PC-9 (cell line): ENCODE measurements at regions of chr22 and their contacts with region 1.

Region 1: DNA sequence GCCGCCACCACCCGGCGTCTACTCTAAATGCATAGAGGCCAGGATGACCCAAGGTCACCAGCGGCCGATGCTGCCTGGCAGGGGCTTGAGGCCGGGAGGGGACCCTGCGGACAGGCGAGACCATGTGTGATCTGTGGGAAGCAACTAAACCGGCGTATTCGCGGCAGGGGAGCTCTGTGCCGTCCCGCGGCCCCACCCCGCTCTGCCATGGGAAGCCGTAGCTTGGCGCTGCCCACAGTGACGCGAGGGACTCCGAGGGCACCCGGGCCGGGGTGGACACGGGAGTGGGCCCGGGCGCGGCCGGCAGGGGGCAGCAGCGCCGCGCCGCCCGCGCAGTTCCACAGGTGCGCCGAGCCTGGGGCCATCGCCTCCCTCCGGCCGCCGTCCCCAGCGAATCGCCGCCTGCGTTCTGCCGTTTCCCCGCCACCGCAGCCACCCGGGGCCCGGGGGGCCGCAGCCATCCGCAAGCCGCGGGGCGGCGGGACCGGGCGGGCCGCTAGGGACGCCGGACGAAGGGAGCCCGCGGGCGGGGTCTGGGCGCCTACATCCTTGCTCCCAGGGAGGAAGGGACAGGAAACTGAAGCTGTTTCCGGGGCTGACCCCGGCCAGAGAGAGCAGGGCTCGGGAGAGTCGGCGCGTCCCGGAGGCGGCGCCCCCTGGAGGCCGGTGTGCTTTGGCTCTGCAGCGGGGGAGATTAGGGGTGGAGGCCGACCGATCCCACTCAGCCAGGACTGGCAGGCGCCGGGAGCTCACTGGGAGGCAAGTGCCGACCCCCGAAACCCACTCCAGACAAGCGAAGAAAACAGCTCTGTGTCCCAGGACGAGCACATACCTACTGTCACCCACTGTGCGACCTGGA is 12.5 kb upstream of the HDHD5 start:
- DNase-seq: peak; percentile 64 to 85
- H3K4me3 ChIP-seq: peak overlapping the region; percentile 64
- H3K27ac ChIP-seq: peak overlapping the region; percentile 41; the same call in 1 of the 2 replicates
- H3K4me1 ChIP-seq: no peaks in the 10 kb centered on the region
- H3K27me3 ChIP-seq: peaks cover 4% of the 10 kb centered on the region; the same call in 1 of the 2 replicates
- CTCF ChIP-seq: peak; percentile 75

Region 2: DNA sequence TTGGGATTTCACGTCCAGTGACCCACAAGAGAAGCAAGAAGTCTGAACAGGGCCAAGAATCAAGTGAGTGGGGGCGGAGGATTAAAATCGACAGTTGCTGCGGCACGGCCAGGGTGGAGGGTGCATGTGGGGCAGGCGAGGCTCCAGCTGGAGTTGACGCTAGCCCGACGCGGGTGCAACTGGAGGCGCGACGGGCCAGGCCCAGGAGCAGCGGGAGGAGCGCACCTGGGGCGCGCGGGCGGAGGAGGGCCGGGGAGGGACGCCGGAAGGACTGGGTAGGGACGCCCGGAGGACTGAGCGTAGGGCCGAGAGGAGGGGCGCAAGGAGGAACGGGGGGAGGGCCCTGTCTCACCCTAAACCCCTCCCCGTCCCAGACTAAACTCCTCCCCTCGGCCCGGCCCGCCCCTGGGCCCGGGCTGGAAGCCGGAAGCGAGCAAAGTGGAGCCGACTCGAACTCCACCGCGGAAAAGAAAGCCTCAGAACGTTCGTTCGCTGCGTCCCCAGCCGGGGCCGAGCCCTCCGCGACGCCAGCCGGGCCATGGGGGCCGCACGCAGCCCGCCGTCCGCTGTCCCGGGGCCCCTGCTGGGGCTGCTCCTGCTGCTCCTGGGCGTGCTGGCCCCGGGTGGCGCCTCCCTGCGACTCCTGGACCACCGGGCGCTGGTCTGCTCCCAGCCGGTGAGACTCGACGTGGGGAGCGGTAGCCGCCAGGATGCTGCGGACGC is 86.8 kb before region 1 on chr22 and contains the start of gene IL17RA:
- CTCF ChIA-PET with region 1: interaction called, 11 read pairs
- POLR2A ChIA-PET with region 1: no interaction called
- intact Hi-C with region 1: no loop called
- DNase-seq: peak; percentile 55 to 86
- H3K4me3 ChIP-seq: peak within 1 kb of the TSS; percentile 78
- H3K27ac ChIP-seq: no peak within 1 kb of the TSS
- H3K4me1 ChIP-seq: no peaks in the 10 kb centered on the region
- H3K27me3 ChIP-seq: no peaks in the 10 kb centered on the region
- CTCF ChIP-seq: no peak
- total RNA-seq, gene IL17RA: 5.0 and 8.2 TPM in 2 replicates

Region 3: DNA sequence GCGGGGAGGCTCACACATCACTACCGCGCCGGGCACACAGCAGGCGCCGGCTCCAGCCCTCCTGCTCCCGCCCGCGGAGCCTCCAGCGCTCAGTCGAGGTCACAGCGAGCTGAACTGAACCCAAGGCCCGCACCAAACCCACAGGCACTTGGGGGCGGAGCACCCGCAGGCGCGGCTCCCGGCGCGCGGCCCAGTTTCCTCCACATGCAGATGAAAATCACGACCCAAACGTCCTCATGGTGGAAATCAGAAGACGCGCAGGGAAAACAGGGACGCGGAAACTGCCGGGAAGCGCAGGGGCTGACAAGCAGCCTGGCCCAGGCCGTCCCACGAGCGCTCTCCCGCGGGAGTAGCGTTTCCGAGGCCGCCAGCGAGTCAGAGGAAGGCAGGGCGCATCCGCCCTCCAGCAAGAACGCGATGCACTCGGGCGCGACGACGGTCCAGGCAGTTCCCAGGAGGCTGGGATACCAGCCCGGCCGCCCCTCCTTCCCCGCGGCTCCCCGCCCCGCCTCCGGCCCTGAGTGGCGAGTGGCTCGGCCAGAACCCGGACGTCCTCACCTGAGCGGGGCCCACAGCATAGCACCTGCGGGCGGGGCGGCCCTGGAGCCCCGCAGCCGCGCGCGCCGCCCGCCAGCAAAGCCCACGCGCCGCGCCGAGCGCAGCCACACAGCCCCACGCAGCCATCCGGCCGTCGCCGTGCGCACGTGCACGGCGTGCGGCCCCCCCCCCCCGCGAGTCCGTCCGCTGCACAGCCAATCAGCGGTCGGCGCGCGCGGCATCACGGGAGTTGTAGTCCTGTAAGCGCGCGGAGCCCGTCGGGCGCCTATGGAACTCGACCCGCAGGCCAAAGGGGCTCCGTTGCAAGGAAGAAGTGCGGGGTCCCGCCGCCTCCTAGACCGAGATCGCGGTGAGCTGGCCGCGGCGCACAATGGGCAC is 12.7 kb before region 1 on chr22 and contains the start of gene HDHD5:
- CTCF ChIA-PET with region 1: interaction called, 11 read pairs
- POLR2A ChIA-PET with region 1: interaction called, 6 read pairs
- intact Hi-C with region 1: no loop called
- DNase-seq: peak; percentile 69 to 84
- H3K4me3 ChIP-seq: peak within 1 kb of the TSS; percentile 88
- H3K27ac ChIP-seq: peak within 1 kb of the TSS; percentile 58
- H3K4me1 ChIP-seq: 0 out of 2 replicates have a peak, but pooled peaks cover 9% of the 10 kb centered on the region
- H3K27me3 ChIP-seq: no peaks in the 10 kb centered on the region
- CTCF ChIP-seq: no peak
- total RNA-seq, gene HDHD5: 26.5 and 31.1 TPM in 2 replicates

Region 4: GRCh38 chr22:17444204-17444504 is 272.6 kb after region 1 on chr22:
- CTCF ChIA-PET with region 1: no interaction called
- POLR2A ChIA-PET with region 1: no interaction called
- intact Hi-C with region 1: no loop called
- DNase-seq: no peak
- H3K4me3 ChIP-seq: no peak overlapping the region
- H3K27ac ChIP-seq: no peak overlapping the region
- H3K4me1 ChIP-seq: no peaks in the 10 kb centered on the region
- H3K27me3 ChIP-seq: peaks cover 46% of the 10 kb centered on the region
- CTCF ChIP-seq: no peak

Region 5: GRCh38 chr22:17492247-17492646 is 320.7 kb after region 1 on chr22:
- CTCF ChIA-PET with region 1: no interaction called
- POLR2A ChIA-PET with region 1: interaction called, 15 read pairs
- intact Hi-C with region 1: no loop called
- DNase-seq: no peak
- H3K4me3 ChIP-seq: no peak overlapping the region
- H3K27ac ChIP-seq: no peak overlapping the region
- H3K4me1 ChIP-seq: no peaks in the 10 kb centered on the region
- H3K27me3 ChIP-seq: peaks cover 62% of the 10 kb centered on the region
- CTCF ChIP-seq: no peak

Region 6: DNA sequence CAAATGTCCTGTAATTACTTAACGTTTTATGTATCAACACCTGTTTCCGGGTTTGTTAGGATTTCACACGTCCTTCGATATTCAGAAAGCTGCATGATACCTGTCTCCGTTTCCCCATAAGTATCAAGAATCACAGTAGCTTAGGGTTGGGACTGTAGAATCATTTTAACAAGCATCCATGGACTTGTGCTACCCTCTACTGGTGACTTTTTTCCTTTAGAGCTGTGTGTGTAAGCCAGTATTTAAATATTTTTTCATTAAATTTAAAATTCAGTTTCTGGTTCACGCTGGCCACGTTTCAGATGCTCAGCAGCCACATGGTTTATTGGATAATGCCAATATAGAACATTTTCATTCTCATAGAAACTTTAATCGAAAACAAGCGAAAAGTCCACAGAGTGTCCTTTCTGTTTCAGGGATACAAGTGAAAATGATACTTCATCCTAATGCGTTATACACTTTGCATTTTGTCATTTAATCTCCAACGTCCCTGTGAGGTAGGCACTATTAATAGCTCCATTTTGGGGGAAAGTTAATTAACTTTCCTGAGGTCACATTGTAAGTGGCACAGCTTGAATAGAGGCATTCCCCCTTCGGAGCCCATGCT is 330.2 kb after region 1 on chr22:
- CTCF ChIA-PET with region 1: interaction called, 16 read pairs
- POLR2A ChIA-PET with region 1: interaction called, 6 read pairs
- intact Hi-C with region 1: loop called (anchors 2 kb)
- DNase-seq: peak in 1 of 2 experiments; percentile 10
- H3K4me3 ChIP-seq: no peak overlapping the region
- H3K27ac ChIP-seq: no peak overlapping the region
- H3K4me1 ChIP-seq: no peaks in the 10 kb centered on the region
- H3K27me3 ChIP-seq: peaks cover 48% of the 10 kb centered on the region
- CTCF ChIP-seq: peak; percentile 75

Region 7: DNA sequence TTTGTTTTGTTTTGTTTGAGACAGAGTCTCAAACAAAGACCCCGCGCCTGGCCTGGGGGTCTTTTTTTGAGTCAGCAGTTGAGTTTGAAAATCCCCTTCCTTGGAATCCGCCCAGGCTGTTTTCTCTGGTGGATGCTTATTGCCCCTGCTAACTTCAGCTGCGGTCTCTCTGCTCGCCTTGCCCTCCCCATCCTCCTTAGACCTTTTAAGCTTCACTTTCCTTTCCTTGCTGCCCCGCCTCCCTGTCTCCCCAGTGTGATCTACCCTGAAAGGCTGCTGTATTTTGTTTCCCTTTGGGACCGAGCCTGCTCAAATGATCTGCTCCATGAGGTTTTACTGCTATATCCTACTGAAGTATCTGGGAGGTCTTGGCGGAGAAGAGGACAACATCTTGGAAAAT is 981.0 kb after region 1 on chr22:
- CTCF ChIA-PET with region 1: interaction called, 10 read pairs
- POLR2A ChIA-PET with region 1: no interaction called
- intact Hi-C with region 1: no loop called
- DNase-seq: no peak
- H3K4me3 ChIP-seq: no peak overlapping the region
- H3K27ac ChIP-seq: no peak overlapping the region
- H3K4me1 ChIP-seq: 0 out of 2 replicates have a peak, but pooled peaks cover 7% of the 10 kb centered on the region
- H3K27me3 ChIP-seq: no peaks in the 10 kb centered on the region
- CTCF ChIP-seq: no peak